K562 (cell line): ENCODE measurements at regions of chr15 and their contacts with region 1.

Region 1: DNA sequence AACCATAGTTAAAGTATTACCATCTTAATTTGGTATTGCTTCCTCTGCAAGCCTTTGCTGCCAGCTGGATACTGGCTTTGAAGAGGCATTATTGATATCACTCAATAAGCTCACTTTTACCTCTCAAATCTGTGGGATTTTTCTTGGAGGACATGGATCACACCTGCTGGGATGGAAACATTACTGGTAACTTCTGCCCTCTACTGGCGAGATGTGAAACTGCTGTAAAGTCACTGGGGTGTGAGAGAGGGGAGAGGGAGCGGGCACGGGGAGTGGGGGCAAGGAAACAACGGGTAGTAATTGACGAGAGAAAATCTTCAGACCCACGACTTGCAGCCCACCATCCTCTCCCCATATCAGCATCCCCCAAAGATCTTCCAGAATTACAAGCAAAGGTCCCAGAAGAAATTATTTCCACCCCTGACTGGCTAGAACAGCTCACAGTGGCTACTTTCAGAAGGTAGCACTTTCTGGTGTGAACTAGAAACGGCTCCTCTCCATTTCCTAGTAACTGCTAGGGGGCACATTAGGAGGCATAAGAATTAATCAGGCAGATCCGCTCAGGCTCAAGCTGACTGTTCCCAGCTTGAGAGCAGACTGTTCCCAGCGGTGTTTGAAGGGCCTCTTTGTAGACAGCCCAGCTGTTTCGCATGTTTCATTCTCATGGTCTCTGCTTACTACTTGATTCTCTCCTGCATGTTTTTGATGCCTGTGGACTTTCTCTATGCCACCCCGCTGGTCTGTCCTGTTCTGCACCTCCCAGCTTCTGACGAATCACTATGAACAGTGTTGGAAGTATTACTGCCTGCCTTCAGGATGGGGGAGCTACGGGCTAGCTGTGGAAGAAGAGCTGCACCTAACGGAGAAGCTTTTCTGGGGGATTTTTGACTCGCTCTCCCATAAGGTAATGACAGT is 230.4 kb upstream of the CHRM5 start:
- DNase-seq: peak; percentile 48 to 63 (median 58)
- ATAC-seq: peak; percentile 88
- H3K4me3 ChIP-seq: no peak overlapping the region
- H3K27ac ChIP-seq: no peak overlapping the region
- H3K4me1 ChIP-seq: no peaks in the 10 kb centered on the region
- H3K27me3 ChIP-seq: peaks cover 0 to 6% of the 10 kb centered on the region in 2 experiments; a peak in 2 of 5 replicates
- CTCF ChIP-seq: peak; percentile 54 to 72 (median 67)
- EP300 ChIP-seq: no peak
- POLR2A ChIP-seq: no peak
- RAD21 ChIP-seq: peak in 1 of 2 experiments; percentile 39; a peak in 2 of 4 replicates

Region 2: DNA sequence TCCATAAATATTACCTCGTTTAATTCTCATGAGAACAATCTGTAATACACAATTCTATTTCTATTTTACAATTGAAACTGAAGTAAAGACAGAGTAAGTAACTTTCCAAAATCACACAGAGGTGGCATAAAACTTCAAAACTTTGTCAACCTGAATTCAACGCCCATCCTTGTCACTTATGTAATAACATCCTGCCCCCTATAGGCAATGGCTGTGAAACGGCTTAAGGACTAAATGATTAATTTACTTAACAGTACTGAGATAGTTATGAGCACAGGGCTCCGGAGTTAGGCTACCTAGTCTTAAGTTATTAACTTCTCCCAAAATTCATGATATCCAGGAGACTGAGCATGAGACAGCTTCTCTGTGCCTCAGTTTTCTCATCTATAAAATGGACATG is 62.7 kb before region 1 on chr15:
- CTCF ChIA-PET with region 1: no interaction called
- POLR2A ChIA-PET with region 1: no interaction called
- in situ Hi-C with region 1: no loop called
- intact Hi-C with region 1: no loop called
- DNase-seq: peak; percentile 17 to 49 (median 28)
- ATAC-seq: peak; percentile 75; the same call in 2 of the 3 replicates
- H3K4me3 ChIP-seq: no peak overlapping the region
- H3K27ac ChIP-seq: no peak overlapping the region
- H3K4me1 ChIP-seq: peaks cover 0 to 3% of the 10 kb centered on the region in 2 experiments; a peak in 3 of 5 replicates
- H3K27me3 ChIP-seq: peaks cover 0 to 5% of the 10 kb centered on the region in 2 experiments; a peak in 1 of 5 replicates
- CTCF ChIP-seq: peak; percentile 39 to 61 (median 60); a peak in 5 of 6 replicates
- EP300 ChIP-seq: no peak
- POLR2A ChIP-seq: no peak
- RAD21 ChIP-seq: peak; percentile 31 to 54; a peak in 3 of 4 replicates

Region 3: DNA sequence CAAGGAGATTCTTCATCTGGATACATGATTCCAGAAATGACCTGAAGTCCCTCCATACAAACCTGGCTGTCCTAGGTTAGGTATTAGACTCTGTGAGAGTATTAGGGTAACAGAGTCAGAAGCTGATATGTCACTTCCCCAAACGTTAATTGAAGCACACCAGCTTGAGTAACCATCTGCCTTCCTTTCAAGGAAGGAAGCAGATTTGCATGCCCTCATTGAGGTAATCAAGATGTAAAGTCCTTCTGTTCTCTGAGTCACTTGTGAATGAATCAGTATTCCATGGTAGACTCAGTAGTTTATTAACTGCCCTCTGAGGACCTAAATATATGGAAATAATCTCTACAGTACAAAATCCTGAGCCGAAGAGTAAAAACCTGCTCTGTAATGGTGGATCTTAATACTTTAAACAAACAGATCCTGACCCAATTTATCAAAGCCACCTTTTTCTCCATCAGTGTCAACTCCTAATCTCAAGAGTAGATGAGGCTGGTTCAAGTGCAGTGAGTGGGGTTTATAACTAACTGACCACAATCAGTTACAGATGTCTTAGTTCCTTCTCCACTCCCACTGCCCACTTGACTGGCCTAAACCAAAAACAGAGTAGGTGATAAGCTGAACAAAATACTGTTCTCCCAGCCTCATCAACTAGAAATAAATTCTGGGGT is 15.8 kb before region 1 on chr15:
- CTCF ChIA-PET with region 1: no interaction called
- POLR2A ChIA-PET with region 1: no interaction called
- in situ Hi-C with region 1: no loop called
- intact Hi-C with region 1: no loop called
- DNase-seq: no peak
- ATAC-seq: no peak
- H3K4me3 ChIP-seq: no peak overlapping the region
- H3K27ac ChIP-seq: no peak overlapping the region
- H3K4me1 ChIP-seq: no peaks in the 10 kb centered on the region
- H3K27me3 ChIP-seq: peaks cover 0 to 4% of the 10 kb centered on the region in 2 experiments; a peak in 3 of 5 replicates
- CTCF ChIP-seq: no peak
- EP300 ChIP-seq: no peak
- POLR2A ChIP-seq: no peak
- RAD21 ChIP-seq: no peak

Region 4: DNA sequence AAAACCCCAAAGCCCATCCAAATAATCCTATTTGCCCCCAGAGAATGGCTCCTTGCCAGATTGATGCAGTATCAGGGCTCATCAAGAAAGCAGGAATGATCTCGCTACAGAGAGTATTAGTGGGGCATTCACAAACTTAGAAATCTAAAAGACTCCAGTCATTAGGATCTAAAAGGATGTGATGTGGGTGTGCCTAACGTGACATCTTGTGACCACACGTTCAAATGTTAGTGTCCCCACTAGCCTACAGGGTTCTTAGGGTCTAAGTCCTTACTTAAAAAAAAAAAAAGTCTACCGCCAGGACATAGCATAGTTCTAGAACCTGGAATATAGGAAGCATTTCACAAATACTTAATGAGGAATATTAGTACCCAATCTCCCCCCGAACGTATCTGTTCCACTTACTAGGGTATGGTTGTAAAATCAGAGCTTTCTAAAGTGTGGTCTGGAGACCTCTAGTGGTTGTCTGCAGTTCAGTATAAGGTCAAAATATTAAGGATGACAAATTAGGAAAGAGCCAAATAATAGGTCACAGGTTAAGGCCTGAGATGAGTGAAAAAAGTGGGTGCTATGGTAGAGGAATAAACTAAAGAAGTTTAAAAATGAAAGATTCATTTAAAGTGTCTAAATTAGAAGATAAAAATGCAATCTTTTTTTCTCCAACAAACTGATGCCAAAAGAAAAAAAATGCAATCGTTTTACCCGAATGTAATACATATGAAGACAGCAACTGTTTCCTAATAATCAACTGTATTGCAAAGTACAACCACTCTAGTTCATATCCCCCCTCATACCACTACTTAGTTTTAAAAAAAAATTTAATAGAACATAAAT is 226.1 kb after region 1 on chr15:
- CTCF ChIA-PET with region 1: no interaction called
- POLR2A ChIA-PET with region 1: no interaction called
- in situ Hi-C with region 1: loop called (anchors 5 kb)
- intact Hi-C with region 1: loop called (anchors 1 kb)
- DNase-seq: peak; percentile 17 to 47 (median 22)
- ATAC-seq: peak; percentile 87
- H3K4me3 ChIP-seq: no peak overlapping the region
- H3K27ac ChIP-seq: no peak overlapping the region
- H3K4me1 ChIP-seq: no peaks in the 10 kb centered on the region
- H3K27me3 ChIP-seq: no peaks in the 10 kb centered on the region; a peak in 1 of 5 replicates
- CTCF ChIP-seq: peak; percentile 51 to 70 (median 61); a peak in 5 of 6 replicates
- EP300 ChIP-seq: no peak
- POLR2A ChIP-seq: no peak
- RAD21 ChIP-seq: peak; percentile 50 to 67